Gastrocnemius medialis (tissue), 4 donors: ENCODE measurements at regions of chr12 and their contacts with region 1.

Region 1: DNA sequence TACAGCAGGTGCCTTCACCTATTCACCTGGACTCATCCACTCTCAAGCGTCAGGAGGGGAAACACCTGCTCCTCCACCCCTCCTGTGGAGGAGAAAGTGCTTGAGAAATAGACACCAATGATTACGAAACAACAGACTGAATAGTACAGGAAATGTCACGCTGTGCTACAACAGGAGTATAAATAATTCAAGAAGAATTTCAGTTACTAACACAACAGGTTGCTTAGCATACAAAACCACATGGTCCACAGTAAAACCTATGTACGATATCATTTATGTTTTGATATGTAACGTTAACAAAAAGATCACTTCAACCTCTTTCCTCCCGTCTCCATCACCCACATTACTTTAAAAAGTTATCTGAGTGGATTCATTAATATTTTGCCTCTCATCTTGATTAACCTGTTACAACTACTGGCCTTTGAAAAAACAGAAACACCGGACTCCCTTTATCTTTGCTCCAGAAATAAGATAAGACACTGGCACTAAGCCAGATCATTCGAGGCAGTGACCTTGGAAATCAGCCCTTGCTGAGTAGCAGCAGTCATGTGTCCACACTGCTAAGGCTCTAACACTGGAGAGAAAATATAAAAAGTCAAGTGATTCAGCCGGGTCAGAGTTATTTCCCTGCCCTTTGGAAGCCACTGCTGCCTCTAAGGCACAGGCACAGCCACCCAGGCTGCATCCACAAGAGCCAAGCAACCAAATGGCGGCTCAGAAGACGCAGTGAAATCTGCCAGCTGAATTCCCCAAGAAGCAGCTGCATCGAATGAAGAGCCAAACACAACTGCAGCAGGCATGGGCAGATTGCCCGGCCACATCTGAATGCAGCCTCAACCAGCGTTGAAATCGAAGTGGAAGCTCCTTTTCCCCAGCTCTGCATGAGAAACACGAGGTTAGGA is 40.9 kb downstream of the NT5DC3 start:
- DNase-seq: peak; percentile 70 to 77
- ATAC-seq: peak; percentile 87 to 88
- H3K4me3 ChIP-seq: peak overlapping the region; percentile 2 to 35 (median 26)
- H3K27ac ChIP-seq: peak overlapping the region; percentile 81 to 94 (median 90)
- H3K4me1 ChIP-seq: peaks cover 29 to 34% of the 10 kb centered on the region in 2 donors
- H3K27me3 ChIP-seq: no peaks in the 10 kb centered on the region
- CTCF ChIP-seq: no peak
- POLR2A ChIP-seq: no peak

Region 2: DNA sequence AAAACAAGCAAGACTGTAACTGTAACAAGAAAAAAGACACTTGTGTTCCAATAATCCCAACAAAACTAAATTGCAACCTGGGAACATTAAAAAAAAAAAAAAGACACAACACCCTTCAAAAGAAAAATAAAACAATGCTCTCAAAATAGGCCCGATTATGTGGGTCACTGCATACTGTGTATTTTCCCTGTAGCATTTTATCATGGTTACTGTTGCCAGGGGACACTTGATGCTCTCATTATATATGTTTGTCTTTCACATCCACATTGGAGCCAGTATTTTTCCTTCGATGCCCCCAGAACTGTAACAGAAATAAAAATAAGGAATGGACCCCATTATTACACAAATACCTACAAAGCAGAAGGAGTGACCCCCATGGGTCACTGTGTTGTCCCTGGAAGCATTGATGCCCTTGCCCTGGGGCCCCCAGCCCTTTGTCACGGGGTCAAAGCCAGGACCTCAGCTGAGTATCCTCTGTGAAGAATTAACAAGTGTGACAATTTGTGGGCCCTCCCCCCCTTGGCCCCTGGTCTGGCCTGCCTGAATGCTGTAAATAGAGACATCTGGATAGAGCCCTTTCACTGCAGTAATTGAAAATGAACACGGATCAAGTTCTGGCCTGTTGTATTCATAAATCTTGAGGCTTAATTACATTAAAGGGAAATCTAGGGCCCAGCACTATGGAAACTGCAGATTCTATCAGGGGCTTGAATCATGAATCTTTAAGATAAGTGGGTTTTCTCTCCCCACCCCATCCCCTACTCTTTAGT is 377.2 kb before region 1 on chr12:
- in situ Hi-C with region 1: no loop called
- intact Hi-C with region 1: no loop called
- DNase-seq: no peak
- ATAC-seq: no peak
- H3K4me3 ChIP-seq: no peak overlapping the region
- H3K27ac ChIP-seq: no peak overlapping the region
- H3K4me1 ChIP-seq: no peaks in the 10 kb centered on the region
- H3K27me3 ChIP-seq: no peaks in the 10 kb centered on the region
- CTCF ChIP-seq: no peak
- POLR2A ChIP-seq: no peak

Region 3: DNA sequence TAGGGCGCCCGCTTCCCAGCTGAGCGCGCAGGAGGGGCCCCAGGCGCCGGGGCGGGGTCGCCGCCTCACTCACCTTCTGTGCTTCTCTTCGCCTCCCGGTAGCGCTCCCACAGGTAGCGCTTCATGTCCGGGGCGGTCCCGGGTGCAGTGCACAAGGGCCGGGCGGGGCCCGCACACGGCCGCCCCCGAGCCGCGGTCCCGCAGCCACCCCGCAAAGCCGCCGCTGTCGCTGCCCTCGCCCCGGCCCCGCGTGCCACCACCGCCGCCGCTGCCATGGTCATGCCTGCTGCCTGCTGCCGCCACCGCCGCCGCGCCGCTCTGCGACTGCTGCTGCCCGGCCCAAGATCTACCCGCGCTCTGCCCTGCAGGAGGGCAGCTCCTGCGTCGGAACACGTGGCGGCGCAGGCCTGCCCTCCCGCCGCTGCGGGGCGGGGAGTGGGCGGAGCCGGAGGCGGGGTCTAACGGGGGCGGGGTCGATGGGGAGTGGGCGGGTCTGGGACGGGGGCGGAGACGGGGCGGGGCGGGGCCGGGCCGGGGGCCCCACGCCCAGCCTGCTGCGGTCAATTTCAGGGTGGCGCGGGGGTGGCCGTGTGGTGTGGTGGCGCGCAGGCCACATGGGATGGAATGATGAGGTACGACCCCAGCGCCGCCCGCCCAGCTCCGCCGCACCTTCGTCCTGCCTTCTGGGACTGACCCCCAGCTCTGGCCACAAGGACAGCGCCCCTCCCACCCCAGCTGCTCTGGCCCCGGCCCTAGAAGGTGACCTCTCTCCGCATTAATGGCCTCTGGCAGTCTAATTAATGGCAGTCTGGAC is 41.0 kb after region 1 on chr12 and contains the start of gene NT5DC3:
- in situ Hi-C with region 1: no loop called
- intact Hi-C with region 1: loop called (anchors 2 kb)
- DNase-seq: peak; percentile 75 to 78
- ATAC-seq: peak; percentile 83 to 87
- H3K4me3 ChIP-seq: peak within 1 kb of the TSS; percentile 63 to 90 (median 79)
- H3K27ac ChIP-seq: peak within 1 kb of the TSS; percentile 80 to 90 (median 82)
- H3K4me1 ChIP-seq: peaks cover 14 to 20% of the 10 kb centered on the region in 2 donors
- H3K27me3 ChIP-seq: no peaks in the 10 kb centered on the region
- CTCF ChIP-seq: peak in 1 of 5 experiments; percentile 12
- POLR2A ChIP-seq: peak; percentile 93 to 97
- total RNA-seq, gene NT5DC3: 8.8 to 18.7 (median 13.9) TPM